ENCODE measurements at regions of chr3 and their contacts with region 1.

Region 1: GRCh38 chr3:25648107-25648535 is 16.6 kb downstream of the TOP2B start:
- DNase-seq: peak; percentile 12
- H3K4me3 ChIP-seq: no peak overlapping the region
- CTCF ChIP-seq: peak; percentile 81

Region 2: GRCh38 chr3:25281041-25281731 is 366.9 kb before region 1 on chr3:
- CTCF ChIA-PET with region 1: no interaction called
- POLR2A ChIA-PET with region 1: no interaction called
- DNase-seq: no peak
- H3K4me3 ChIP-seq: no peak overlapping the region
- CTCF ChIP-seq: no peak

Region 3: GRCh38 chr3:25633919-25634318 is 14.2 kb before region 1 on chr3:
- CTCF ChIA-PET with region 1: interaction called, 37 read pairs
- POLR2A ChIA-PET with region 1: no interaction called
- DNase-seq: no peak
- H3K4me3 ChIP-seq: no peak overlapping the region
- CTCF ChIP-seq: no peak

Region 4: GRCh38 chr3:25713335-25713985 is 65.3 kb after region 1 on chr3:
- CTCF ChIA-PET with region 1: no interaction called
- POLR2A ChIA-PET with region 1: no interaction called
- DNase-seq: no peak
- H3K4me3 ChIP-seq: no peak overlapping the region
- CTCF ChIP-seq: no peak

Region 5: GRCh38 chr3:25782938-25783660 is 135.0 kb after region 1 on chr3 and contains the start of gene NGLY1:
- CTCF ChIA-PET with region 1: interaction called, 11 read pairs
- POLR2A ChIA-PET with region 1: no interaction called
- DNase-seq: no peak
- H3K4me3 ChIP-seq: peak within 1 kb of the TSS; percentile 86
- CTCF ChIP-seq: peak; percentile 4

Region 6: DNA sequence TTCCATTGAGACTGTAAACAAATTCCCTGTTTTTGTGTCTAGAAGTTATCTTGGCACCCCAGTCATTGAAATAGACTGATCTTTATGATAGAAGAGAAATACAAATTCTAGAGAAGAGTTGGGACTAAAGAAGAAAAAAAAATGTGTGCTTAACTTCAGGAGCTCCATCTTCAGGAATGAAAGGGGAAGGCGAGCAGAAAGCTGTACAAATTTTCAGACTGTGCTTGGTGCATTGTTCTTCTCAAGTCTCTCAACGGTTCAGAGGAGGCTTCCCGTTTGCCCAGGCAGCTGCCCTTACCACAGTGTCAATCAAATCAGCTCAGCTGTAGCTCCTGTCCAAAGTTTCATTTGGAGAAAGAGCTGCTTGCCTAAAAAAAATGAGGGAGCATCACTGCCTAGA is 183.5 kb after region 1 on chr3:
- CTCF ChIA-PET with region 1: interaction called, 33 read pairs
- POLR2A ChIA-PET with region 1: no interaction called
- DNase-seq: no peak
- H3K4me3 ChIP-seq: no peak overlapping the region
- CTCF ChIP-seq: peak; percentile 40

Region 7: DNA sequence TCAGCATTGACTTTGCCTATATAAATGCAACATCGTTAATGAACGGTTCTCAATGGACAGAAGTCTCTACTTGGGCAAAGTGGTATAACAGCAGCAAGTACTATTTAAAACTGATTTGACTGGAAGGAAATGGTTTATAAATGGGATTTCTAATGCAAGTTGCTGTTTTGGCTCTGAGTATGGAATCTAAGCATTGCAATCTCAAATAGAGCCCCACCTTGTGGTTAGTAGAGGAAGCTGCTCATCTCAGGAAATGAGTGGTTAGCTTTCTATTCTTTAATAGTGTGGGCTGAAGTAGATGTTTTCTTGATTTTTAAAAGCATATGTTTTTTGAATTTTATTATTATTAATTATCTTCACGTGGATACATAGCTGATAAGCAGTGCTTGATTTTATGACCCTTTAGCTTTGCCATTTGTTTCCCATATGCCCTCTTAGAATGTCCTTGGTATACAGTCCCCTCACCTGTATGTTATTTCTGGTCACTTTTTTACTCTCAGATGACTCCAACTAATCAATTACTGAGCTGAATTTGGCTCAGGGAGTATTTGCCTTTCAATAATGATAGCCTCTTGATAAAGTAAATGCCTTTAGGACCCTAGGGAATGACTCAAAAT is 208.9 kb after region 1 on chr3:
- CTCF ChIA-PET with region 1: interaction called, 179 read pairs
- POLR2A ChIA-PET with region 1: no interaction called
- DNase-seq: peak; percentile 19
- H3K4me3 ChIP-seq: no peak overlapping the region
- CTCF ChIP-seq: peak; percentile 67

Measured in AG04449 (cell line).